IMR-90 (cell line): ENCODE measurements at regions of chr22 and their contacts with region 1.

Region 1: GRCh38 chr22:40276996-40277823 is 69.1 kb upstream of the ADSL start:
- DNase-seq: peak; percentile 51
- ATAC-seq: peak; percentile 56
- H3K4me3 ChIP-seq: peak overlapping the region; percentile 75
- H3K27ac ChIP-seq: peak overlapping the region; percentile 73
- H3K4me1 ChIP-seq: peaks cover 2% of the 10 kb centered on the region; the same call in 1 of the 2 replicates
- H3K27me3 ChIP-seq: no peaks in the 10 kb centered on the region
- CTCF ChIP-seq: no peak
- POLR2A ChIP-seq: no peak
- RAD21 ChIP-seq: no peak

Region 2: GRCh38 chr22:40177738-40178416 is 99.3 kb before region 1 on chr22 and contains the start of gene TNRC6B:
- CTCF ChIA-PET with region 1: no interaction called
- POLR2A ChIA-PET with region 1: no interaction called
- dilution Hi-C with region 1: no loop called
- in situ Hi-C with region 1: no loop called
- intact Hi-C with region 1: loop called (anchors 2 kb)
- DNase-seq: peak; percentile 98
- ATAC-seq: peak; percentile 83
- H3K4me3 ChIP-seq: peak within 1 kb of the TSS; percentile 60
- H3K27ac ChIP-seq: peak within 1 kb of the TSS; percentile 53
- H3K4me1 ChIP-seq: peaks cover 5% of the 10 kb centered on the region
- H3K27me3 ChIP-seq: no peaks in the 10 kb centered on the region
- CTCF ChIP-seq: no peak
- POLR2A ChIP-seq: peak; percentile 98
- RAD21 ChIP-seq: peak; percentile 23
- total RNA-seq, gene TNRC6B: 14.7 and 17.0 TPM in 2 replicates